ENCODE measurements at regions of chr4 and their contacts with region 1.

Region 1: GRCh38 chr4:89226665-89227574 is 80.7 kb downstream of the GPRIN3 start:
- DNase-seq: no peak
- ATAC-seq: peak; percentile 100
- H3K4me3 ChIP-seq: no peak overlapping the region
- H3K27ac ChIP-seq: no peak overlapping the region
- H3K4me1 ChIP-seq: no peaks in the 10 kb centered on the region
- H3K27me3 ChIP-seq: no peaks in the 10 kb centered on the region
- CTCF ChIP-seq: peak; percentile 76

Region 2: DNA sequence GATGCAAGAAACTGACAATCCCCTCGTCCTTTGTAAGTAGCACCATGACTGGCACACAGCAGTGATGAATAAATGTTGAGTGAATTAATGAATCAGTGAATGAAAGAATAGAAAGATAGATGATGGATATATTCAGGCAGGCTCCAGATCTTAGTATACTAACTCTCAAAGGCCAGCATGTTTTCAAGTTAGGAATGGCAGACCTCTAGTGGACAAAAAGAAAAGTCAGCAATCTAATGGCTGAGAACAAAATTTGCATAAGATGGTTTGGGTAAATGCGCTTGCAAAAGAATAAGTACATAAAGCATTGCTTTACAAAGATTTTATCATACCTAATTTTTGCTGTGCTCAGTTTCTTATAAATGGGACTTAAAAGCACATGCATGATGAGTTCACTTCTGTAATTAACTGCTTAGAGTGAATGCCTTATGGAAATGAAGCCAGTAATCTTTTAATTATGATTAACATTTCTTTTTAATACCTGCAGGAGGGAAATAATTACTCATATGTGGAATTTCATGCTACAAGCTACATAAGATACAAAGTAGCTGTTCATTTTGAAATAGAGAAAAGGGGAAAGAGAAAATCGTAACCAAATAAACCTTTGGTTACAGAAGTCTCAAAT is 207.6 kb after region 1 on chr4:
- intact Hi-C with region 1: loop called (anchors 10 kb)
- DNase-seq: no peak
- ATAC-seq: peak; percentile 77
- H3K4me3 ChIP-seq: no peak overlapping the region
- H3K27ac ChIP-seq: no peak overlapping the region
- H3K4me1 ChIP-seq: no peaks in the 10 kb centered on the region
- H3K27me3 ChIP-seq: no peaks in the 10 kb centered on the region
- CTCF ChIP-seq: peak; percentile 75

Region 3: DNA sequence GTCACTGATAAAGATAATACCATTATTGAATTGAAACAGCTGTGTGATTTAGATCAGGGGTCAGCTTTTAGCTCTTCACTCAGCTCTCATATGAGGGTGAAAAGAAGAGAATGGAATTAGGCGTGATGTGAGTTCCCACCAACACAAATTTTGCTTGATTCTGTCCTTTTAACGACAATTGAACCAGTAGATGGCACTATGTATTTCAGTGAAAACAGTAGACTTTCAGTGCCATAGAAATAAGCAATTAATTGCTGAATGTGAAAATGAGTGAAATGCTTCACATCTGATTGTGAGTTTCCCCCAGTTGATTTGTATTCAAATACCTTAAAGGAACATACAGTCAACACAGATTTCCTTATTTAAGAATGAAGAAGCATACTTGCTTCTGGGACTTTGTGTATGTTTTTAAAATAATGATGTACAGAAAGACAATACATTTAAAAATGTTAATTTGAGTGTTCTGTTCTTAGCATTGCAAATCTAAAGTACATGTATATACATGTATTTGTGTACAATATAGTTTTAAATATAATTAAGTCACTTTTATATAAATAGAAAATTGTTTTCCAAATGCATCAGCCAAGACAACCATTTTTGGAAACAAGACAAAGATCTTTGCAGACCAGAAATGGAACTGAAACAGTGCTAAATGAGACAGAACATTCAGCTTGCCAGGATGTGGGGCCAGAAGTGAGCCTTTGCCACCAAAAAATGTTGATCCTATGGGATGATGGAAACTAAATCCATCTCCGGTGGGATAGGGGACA is 431.2 kb after region 1 on chr4:
- intact Hi-C with region 1: no loop called
- DNase-seq: no peak
- ATAC-seq: no peak
- H3K4me3 ChIP-seq: no peak overlapping the region
- H3K27ac ChIP-seq: no peak overlapping the region
- H3K4me1 ChIP-seq: no peaks in the 10 kb centered on the region
- H3K27me3 ChIP-seq: no peaks in the 10 kb centered on the region
- CTCF ChIP-seq: peak; percentile 37